ENCODE measurements at regions of chr11 and their contacts with region 1.

Region 1: GRCh38 chr11:57778318-57779037 is 16.9 kb downstream of the CTNND1 start:
- DNase-seq: peak; percentile 99
- ATAC-seq: peak; percentile 95
- H3K4me3 ChIP-seq: peak overlapping the region; percentile 29 to 56 (median 43); a peak in 4 of 6 replicates
- H3K27ac ChIP-seq: peak overlapping the region; percentile 96
- H3K4me1 ChIP-seq: peaks cover 98% of the 10 kb centered on the region
- H3K27me3 ChIP-seq: no peaks in the 10 kb centered on the region
- CTCF ChIP-seq: no peak
- EP300 ChIP-seq: peak; percentile 87 to 96
- POLR2A ChIP-seq: peak; percentile 53 to 90; a peak in 3 of 4 replicates
- RAD21 ChIP-seq: peak; percentile 23; the same call in 1 of the 2 replicates

Region 2: GRCh38 chr11:57249384-57250319 is 528.8 kb before region 1 on chr11:
- CTCF ChIA-PET with region 1: no interaction called
- POLR2A ChIA-PET with region 1: no interaction called
- in situ Hi-C with region 1: no loop called
- intact Hi-C with region 1: no loop called
- DNase-seq: peak; percentile 23
- ATAC-seq: peak; percentile 76
- H3K4me3 ChIP-seq: no peak overlapping the region
- H3K27ac ChIP-seq: no peak overlapping the region
- H3K4me1 ChIP-seq: no peaks in the 10 kb centered on the region
- H3K27me3 ChIP-seq: no peaks in the 10 kb centered on the region
- CTCF ChIP-seq: peak; percentile 71
- EP300 ChIP-seq: no peak
- POLR2A ChIP-seq: no peak
- RAD21 ChIP-seq: no peak

Region 3: GRCh38 chr11:57712256-57713150 is 66.0 kb before region 1 on chr11 and contains the start of gene TMX2:
- CTCF ChIA-PET with region 1: no interaction called
- POLR2A ChIA-PET with region 1: interaction called, 14 read pairs
- in situ Hi-C with region 1: no loop called
- intact Hi-C with region 1: loop called (anchors 2 kb)
- DNase-seq: peak; percentile 100
- ATAC-seq: peak; percentile 95
- H3K4me3 ChIP-seq: peak within 1 kb of the TSS; percentile 92 to 98 (median 92)
- H3K27ac ChIP-seq: peak within 1 kb of the TSS; percentile 82
- H3K4me1 ChIP-seq: peaks cover 29% of the 10 kb centered on the region
- H3K27me3 ChIP-seq: no peaks in the 10 kb centered on the region; a peak in 1 of 5 replicates
- CTCF ChIP-seq: no peak
- EP300 ChIP-seq: no peak
- POLR2A ChIP-seq: peak; percentile 69 to 85
- RAD21 ChIP-seq: no peak
- total RNA-seq, gene TMX2: 67.0 and 129 TPM in 2 replicates

Region 4: DNA sequence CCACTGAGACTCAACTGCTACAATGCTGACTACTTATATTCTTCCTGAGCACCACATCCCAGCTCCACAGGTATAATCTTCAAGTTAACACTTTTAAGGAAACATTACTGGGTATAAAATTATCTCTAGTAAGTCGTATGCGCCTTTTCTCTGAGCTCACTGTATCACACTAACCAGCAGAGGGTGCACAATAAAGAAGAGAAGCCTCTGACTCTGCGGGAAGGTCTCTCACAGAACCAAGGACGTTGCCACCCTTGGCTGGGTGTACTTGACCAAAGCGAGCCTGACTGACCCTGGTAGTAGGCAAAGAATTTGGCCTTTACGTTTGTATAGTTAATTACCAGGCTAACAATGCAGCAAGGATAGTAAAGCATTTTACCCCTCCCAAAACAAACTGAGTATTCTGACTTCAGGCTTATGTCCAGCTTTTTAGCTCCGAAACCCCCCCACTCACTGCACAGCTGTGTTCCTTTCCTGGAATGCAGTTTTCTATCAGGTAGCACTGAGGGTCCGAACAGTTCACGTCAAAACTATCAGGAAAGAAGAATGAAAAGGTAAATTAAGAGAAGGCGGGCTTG is 26.7 kb before region 1 on chr11 and contains the start of gene BTBD18:
- CTCF ChIA-PET with region 1: no interaction called
- POLR2A ChIA-PET with region 1: interaction called, 12 read pairs
- in situ Hi-C with region 1: no loop called
- intact Hi-C with region 1: no loop called
- DNase-seq: peak; percentile 83
- ATAC-seq: peak; percentile 94
- H3K4me3 ChIP-seq: no peak within 1 kb of the TSS
- H3K27ac ChIP-seq: peak within 1 kb of the TSS; percentile 31
- H3K4me1 ChIP-seq: peaks cover 26% of the 10 kb centered on the region
- H3K27me3 ChIP-seq: no peaks in the 10 kb centered on the region
- CTCF ChIP-seq: peak; percentile 76
- EP300 ChIP-seq: no peak
- POLR2A ChIP-seq: no peak
- RAD21 ChIP-seq: peak; percentile 71
- total RNA-seq, gene BTBD18: not detected in 2 replicates

Region 5: DNA sequence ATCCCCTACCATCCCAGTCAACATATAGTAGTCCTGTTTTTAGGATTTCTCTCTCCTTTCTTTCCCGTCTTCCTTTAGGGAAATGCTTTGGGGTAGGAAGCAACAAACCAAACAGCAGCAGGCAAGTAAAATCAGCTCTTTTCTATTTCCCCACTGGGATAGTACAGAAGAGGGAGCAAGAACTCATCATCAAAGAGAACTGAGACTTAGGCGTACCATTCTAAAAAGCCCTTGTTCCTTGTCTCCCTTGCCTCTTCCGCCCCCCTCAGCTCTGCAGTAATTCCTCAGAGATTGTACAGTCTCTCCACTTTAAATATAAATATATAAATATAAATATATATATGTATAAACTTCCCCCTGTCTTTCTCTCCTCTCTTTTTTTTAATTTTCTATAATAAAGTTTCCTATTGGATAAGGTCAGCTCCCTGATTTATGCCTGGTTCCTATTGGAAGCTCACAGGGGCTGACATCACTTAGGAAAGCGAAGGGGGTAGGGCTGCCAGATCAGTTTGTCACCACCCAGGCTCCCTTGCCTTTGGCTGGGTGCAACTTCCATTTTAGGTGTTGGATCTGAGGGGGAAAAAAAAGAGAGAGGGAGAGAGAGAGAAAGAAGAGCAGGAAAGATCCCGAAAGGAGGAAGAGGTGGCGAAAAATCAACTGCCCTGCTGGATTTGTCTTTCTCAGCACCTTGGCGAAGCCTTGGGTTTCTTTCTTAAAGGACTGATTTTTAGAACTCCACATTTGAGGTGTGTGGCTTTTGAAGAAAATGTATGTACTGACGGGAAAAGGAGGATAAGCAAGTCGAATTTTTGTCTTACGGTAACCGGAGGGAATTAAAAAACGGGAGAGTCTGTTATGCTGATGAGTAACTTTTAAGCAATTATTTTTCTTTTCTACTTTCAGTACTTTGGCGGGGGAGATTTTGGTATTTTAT is 16.9 kb before region 1 on chr11 and contains the start of gene CTNND1:
- CTCF ChIA-PET with region 1: no interaction called
- POLR2A ChIA-PET with region 1: interaction called, 215 read pairs
- in situ Hi-C with region 1: no loop called
- intact Hi-C with region 1: loop called (anchors 1 kb)
- DNase-seq: peak; percentile 97
- ATAC-seq: peak; percentile 95
- H3K4me3 ChIP-seq: peak within 1 kb of the TSS; percentile 80 to 97 (median 88)
- H3K27ac ChIP-seq: peak within 1 kb of the TSS; percentile 99
- H3K4me1 ChIP-seq: peaks cover 49% of the 10 kb centered on the region
- H3K27me3 ChIP-seq: no peaks in the 10 kb centered on the region; a peak in 1 of 5 replicates
- CTCF ChIP-seq: no peak
- EP300 ChIP-seq: peak in 1 of 2 experiments; percentile 4; a peak in 1 of 4 replicates
- POLR2A ChIP-seq: peak; percentile 68 to 87
- RAD21 ChIP-seq: no peak
- total RNA-seq, gene CTNND1: 128 and 184 TPM in 2 replicates

Measured in HepG2 (cell line).